Ascending aorta (tissue), 2 donors: ENCODE measurements at regions of chr7 and their contacts with region 1.

Region 1: GRCh38 chr7:3218411-3219225 is 82.4 kb upstream of the SDK1 start:
- DNase-seq: no peak
- H3K4me3 ChIP-seq: peak overlapping the region; percentile 11 to 23
- H3K27ac ChIP-seq: peak overlapping the region; percentile 67 to 72
- H3K4me1 ChIP-seq: peaks cover 12 to 42% of the 10 kb centered on the region in 2 donors
- H3K27me3 ChIP-seq: no peaks in the 10 kb centered on the region
- CTCF ChIP-seq: no peak

Region 2: DNA sequence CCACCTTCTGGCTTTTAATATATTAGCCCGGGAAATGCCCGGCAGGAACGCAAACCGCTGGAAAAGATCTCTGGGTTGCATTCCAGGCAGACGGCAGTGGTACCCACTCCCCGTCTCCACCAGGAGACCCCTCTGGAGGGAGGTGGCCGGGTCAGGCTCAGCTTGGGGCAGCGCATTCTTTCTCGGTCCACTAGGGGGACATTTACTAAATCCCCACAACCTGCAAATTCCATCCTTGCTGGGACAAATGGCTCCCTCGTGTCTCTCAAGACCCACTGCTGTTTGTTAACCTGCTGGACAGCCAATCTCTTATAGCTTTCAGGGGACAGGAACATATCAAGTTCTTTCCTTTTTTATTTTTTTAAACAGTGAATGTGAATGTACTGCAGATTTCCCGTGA is 129.1 kb before region 1 on chr7:
- intact Hi-C with region 1: loop called (anchors 10 kb)
- DNase-seq: no peak
- H3K4me3 ChIP-seq: no peak overlapping the region
- H3K27ac ChIP-seq: no peak overlapping the region
- H3K4me1 ChIP-seq: peaks cover 0 to 3% of the 10 kb centered on the region in 2 donors
- H3K27me3 ChIP-seq: no peaks in the 10 kb centered on the region
- CTCF ChIP-seq: peak; percentile 18 to 36 (median 27)

Region 3: DNA sequence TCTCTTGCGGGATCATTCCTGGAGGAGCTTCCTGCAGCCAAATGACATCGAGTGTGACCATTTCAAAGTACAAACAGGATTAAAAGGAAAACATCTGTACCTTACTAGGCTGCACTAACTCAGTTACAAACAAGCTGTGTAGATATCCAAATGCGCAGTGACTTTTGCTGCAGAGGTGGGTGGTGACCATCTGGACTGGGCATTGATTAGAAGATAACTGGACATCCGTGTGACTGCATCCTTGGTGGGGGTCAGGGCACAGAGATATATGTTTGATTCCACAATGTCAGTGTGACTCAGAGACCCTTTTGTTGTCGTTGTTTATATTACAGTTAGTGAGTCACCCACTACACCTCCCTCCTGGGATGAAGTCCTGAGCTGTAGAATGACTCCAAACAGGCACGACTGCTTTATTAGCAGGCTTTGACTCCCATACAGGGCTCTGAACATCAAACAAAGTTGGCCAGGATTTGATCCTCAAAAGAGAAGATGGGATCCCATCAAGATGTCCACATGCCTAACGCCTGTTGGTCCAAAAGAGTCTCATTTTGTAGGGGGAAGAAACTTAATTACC is 25.7 kb after region 1 on chr7:
- intact Hi-C with region 1: loop called (anchors 2 kb)
- DNase-seq: no peak
- H3K4me3 ChIP-seq: peak overlapping the region in 1 of 2 donors; percentile 2
- H3K27ac ChIP-seq: peak overlapping the region; percentile 74 to 77
- H3K4me1 ChIP-seq: peaks cover 0 to 19% of the 10 kb centered on the region in 2 donors
- H3K27me3 ChIP-seq: no peaks in the 10 kb centered on the region
- CTCF ChIP-seq: no peak

Region 4: GRCh38 chr7:3260401-3260715 is 41.7 kb after region 1 on chr7:
- intact Hi-C with region 1: loop called (anchors 5 kb)
- DNase-seq: no peak
- H3K4me3 ChIP-seq: peak overlapping the region; percentile 23 to 58
- H3K27ac ChIP-seq: peak overlapping the region; percentile 47 to 53
- H3K4me1 ChIP-seq: no peaks in the 10 kb centered on the region
- H3K27me3 ChIP-seq: no peaks in the 10 kb centered on the region
- CTCF ChIP-seq: no peak